SK-N-SH (cell line): ENCODE measurements at regions of chr17 and their contacts with region 1.

Region 1: DNA sequence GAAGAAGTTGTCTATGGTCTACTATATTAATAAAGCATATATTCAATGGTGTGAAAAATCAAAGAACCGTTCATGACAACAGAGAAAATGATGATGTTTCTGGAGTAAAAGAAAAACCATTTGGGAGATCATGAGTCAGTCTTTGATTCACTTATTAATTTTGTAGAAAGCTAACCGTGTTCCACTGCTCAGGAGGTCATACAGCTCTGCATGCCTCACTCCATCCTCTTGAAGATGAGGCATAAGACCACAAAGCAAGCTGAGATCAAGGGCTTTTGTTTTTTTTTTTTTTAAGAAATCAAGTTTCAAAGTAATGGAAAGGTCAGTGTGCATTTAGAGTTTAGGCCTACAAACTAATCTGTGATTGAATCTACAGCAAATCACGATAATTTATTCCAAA is 206.4 kb downstream of the CEP112 start:
- DNase-seq: no peak
- H3K4me3 ChIP-seq: no peak overlapping the region
- H3K27ac ChIP-seq: no peak overlapping the region
- H3K4me1 ChIP-seq: peaks cover 0 to 4% of the 10 kb centered on the region in 2 experiments; a peak in 2 of 4 replicates
- H3K27me3 ChIP-seq: no peaks in the 10 kb centered on the region
- CTCF ChIP-seq: no peak
- EP300 ChIP-seq: no peak
- RAD21 ChIP-seq: no peak

Region 2: GRCh38 chr17:66002063-66002585 is 16.6 kb after region 1 on chr17:
- CTCF ChIA-PET with region 1: interaction called, 11 read pairs
- POLR2A ChIA-PET with region 1: no interaction called
- DNase-seq: no peak
- H3K4me3 ChIP-seq: no peak overlapping the region
- H3K27ac ChIP-seq: no peak overlapping the region
- H3K4me1 ChIP-seq: no peaks in the 10 kb centered on the region
- H3K27me3 ChIP-seq: no peaks in the 10 kb centered on the region
- CTCF ChIP-seq: no peak
- EP300 ChIP-seq: no peak
- RAD21 ChIP-seq: no peak